Calu3 (cell line): ENCODE measurements at regions of chr11 and their contacts with region 1.

Region 1: DNA sequence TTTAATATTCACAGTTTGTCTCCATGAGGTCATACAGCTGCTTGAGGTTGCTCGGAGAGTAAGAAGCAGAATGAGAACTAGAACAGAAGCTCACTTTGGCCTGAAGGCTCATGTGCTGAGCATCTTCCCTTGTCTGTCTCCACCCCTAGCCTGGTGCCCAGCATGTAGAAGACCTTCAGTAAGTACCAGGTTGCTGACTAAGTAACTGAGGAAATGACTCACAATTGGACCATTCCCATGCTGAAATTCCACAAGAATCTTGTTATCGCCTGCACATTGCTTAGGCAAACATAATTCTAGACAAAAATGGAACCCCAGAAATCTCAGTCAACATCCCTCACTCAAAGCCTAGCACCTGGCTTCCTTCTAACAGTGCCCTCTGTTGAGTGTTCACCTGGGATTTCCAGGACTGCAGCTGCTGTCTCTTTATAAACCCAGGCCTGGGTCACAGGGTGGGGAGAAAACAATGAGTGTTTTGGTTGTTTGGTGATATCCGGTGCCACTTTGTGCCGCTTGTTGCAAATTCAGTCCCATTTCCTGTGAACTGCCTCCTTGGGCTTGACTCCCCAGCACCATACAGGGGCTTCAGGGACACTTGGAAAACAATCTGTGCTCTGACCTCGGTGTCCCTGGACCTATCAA is 406.8 kb downstream of the ETS1 start:
- DNase-seq: no peak
- H3K4me3 Mint-ChIP-seq: no peak overlapping the region
- H3K27ac Mint-ChIP-seq: peak overlapping the region; percentile 61
- H3K4me1 Mint-ChIP-seq: peaks cover 36% of the 10 kb centered on the region
- H3K27me3 Mint-ChIP-seq: no peaks in the 10 kb centered on the region
- CTCF ChIP-seq: no peak

Region 2: DNA sequence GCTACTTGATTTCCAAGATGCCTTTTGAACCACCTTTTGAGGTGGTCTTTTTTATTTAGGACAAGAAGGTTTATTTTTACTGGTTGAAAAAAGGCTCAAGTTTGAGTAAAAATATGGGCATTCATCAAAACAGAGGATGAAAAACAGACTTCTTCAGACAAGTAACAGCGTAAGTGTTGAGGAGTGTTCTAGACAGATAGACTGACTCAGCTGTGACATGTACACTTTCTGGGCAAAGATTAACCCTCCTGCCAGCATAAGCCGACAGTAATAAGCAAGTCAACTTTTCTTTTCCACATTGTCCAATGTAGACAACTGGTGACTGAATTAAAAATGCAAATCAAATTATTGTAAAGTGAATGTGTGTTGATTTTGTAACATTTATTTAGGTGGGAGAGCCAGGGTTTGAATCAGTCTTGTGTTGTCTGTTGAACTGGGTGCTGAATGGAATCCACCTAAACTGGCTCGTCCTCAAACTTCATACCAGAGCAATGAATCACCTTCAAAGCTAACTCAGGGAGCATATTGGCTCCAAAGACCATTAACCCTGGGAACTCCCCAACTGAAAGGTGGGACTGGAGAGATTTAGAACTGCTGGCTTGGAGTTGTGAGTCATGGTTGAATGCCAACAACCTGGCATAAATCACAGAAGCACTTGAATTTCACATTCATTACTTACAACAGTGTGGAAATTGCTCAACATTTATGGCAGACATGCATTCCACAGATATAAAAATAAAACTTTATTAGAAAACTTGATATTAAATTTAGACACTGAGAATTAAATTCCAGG is 29.8 kb after region 1 on chr11:
- CTCF ChIA-PET with region 1: no interaction called
- intact Hi-C with region 1: loop called (anchors 2 kb)
- DNase-seq: peak; percentile 76
- H3K4me3 Mint-ChIP-seq: no peak overlapping the region
- H3K27ac Mint-ChIP-seq: peak overlapping the region; percentile 72
- H3K4me1 Mint-ChIP-seq: peaks cover 33% of the 10 kb centered on the region
- H3K27me3 Mint-ChIP-seq: no peaks in the 10 kb centered on the region
- CTCF ChIP-seq: no peak